Activated CD4-positive, alpha-beta T cell treated with anti-CD3 and anti-CD28 coated beads, Interleukin-2, amount 10 ng/mL, durations not matched to agents 7 days and 5 days (primary cell): ENCODE measurements at regions of chr4 and their contacts with region 1.

Region 1: GRCh38 chr4:1693129-1693896 is 9.2 kb upstream of the FAM53A start:
- DNase-seq: peak; percentile 81
- H3K4me3 Mint-ChIP-seq: no peak overlapping the region
- H3K27ac Mint-ChIP-seq: peak overlapping the region; percentile 61
- H3K4me1 Mint-ChIP-seq: peaks cover 11% of the 10 kb centered on the region
- H3K27me3 Mint-ChIP-seq: no peaks in the 10 kb centered on the region

Region 2: DNA sequence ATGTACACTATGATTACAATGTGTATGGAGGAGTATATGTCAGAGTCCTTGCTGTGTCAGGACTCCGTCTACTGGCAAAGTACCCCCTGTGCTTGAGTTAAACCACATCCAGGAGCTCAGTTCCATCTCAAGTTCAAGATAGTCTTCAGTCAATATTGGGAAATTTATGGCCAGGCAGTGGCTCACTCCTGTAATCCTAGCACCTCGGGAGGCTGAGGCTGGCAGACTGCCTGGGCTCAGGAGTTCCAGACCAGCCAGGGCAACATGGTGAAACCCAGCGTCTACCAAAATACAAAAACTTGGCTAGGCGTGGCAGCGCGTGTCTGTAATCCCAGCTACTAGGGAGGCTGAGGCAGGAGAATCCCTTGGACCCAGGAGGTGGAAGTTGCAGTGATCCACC is 13.0 kb after region 1 on chr4:
- CTCF ChIA-PET with region 1: interaction called, 16 read pairs
- POLR2A ChIA-PET with region 1: interaction called, 3 read pairs
- DNase-seq: no peak
- H3K4me3 Mint-ChIP-seq: no peak overlapping the region
- H3K27ac Mint-ChIP-seq: no peak overlapping the region
- H3K4me1 Mint-ChIP-seq: peaks cover 76% of the 10 kb centered on the region
- H3K27me3 Mint-ChIP-seq: no peaks in the 10 kb centered on the region

Region 3: DNA sequence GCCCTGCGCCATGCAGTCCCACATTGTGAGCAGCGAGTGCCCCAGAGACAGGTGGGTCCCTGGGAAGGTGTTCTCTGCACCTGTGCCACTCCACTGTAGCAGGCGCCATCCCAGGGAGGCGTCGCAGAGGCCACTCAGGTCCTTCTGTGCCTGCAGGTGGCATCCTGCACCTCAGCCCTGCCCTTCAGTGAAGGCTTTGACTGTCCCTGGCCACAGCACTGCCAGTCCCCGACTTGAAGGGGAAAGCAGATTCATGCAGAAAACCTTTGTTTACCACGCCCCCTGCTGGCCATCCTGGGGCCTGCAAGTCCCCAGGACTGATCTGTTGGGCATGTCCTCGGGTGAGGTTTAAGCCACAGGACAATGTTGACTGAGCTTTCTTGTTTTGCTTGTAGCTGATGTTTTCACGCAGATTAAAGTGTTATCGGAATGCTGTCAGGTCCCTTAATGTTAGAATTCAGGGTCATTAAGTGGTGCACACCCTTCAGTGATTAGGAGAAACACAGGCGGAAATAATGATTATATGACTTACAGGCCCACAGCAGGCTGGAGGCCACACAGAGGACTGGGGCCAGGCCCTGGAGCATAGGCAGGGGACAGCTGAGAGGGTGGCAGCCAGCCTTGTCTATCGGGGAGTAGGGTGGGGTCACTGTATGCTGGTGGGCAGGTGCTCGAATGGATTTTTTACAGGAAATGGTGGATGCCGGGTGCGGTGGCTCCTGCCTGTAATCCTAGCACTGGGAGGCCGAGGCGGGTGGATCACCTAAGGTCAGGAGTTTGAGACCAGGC is 33.0 kb after region 1 on chr4:
- CTCF ChIA-PET with region 1: interaction called, 94 read pairs
- POLR2A ChIA-PET with region 1: interaction called, 3 read pairs
- DNase-seq: peak; percentile 93
- H3K4me3 Mint-ChIP-seq: peak overlapping the region; percentile 19
- H3K27ac Mint-ChIP-seq: peak overlapping the region; percentile 73
- H3K4me1 Mint-ChIP-seq: peaks cover 71% of the 10 kb centered on the region
- H3K27me3 Mint-ChIP-seq: no peaks in the 10 kb centered on the region

Region 4: GRCh38 chr4:2080429-2081300 is 387.4 kb after region 1 on chr4:
- CTCF ChIA-PET with region 1: no interaction called
- POLR2A ChIA-PET with region 1: no interaction called
- DNase-seq: no peak
- H3K4me3 Mint-ChIP-seq: no peak overlapping the region
- H3K27ac Mint-ChIP-seq: no peak overlapping the region
- H3K4me1 Mint-ChIP-seq: no peaks in the 10 kb centered on the region
- H3K27me3 Mint-ChIP-seq: no peaks in the 10 kb centered on the region